ENCODE measurements at regions of chr6 and their contacts with region 1.

Region 1: GRCh38 chr6:55276745-55277530 is 50.3 kb upstream of the GFRAL start:
- DNase-seq: no peak
- H3K4me3 Mint-ChIP-seq: no peak overlapping the region
- H3K27ac Mint-ChIP-seq: no peak overlapping the region
- H3K4me1 Mint-ChIP-seq: no peaks in the 10 kb centered on the region
- H3K27me3 Mint-ChIP-seq: no peaks in the 10 kb centered on the region

Region 2: DNA sequence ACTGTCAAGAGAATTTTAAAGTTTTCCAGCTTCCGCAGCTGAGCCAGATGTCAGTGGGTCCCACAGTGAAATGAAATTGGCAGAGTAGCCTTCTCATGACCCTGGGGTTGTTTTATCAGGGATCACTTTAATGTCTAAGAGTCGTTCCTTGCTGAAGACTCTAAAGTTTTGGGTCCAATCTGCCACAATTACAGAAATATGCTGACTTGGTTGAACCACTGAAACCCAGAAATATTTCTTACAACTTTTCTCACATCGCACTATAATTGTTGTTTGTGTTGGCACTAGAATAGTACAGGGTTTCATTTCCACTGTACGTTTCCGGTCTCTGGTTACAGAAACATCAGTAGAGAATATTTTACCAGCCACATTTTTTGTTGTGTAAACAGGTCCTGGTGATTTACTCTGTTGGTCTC is 193.0 kb after region 1 on chr6:
- intact Hi-C with region 1: loop called (anchors 10 kb)
- DNase-seq: no peak
- H3K4me3 Mint-ChIP-seq: no peak overlapping the region
- H3K27ac Mint-ChIP-seq: no peak overlapping the region
- H3K4me1 Mint-ChIP-seq: no peaks in the 10 kb centered on the region
- H3K27me3 Mint-ChIP-seq: no peaks in the 10 kb centered on the region

Region 3: GRCh38 chr6:55953335-55953734 is 676.4 kb after region 1 on chr6:
- intact Hi-C with region 1: loop called (anchors 5 kb)
- DNase-seq: no peak
- H3K4me3 Mint-ChIP-seq: no peak overlapping the region
- H3K27ac Mint-ChIP-seq: no peak overlapping the region
- H3K4me1 Mint-ChIP-seq: no peaks in the 10 kb centered on the region
- H3K27me3 Mint-ChIP-seq: no peaks in the 10 kb centered on the region

Region 4: DNA sequence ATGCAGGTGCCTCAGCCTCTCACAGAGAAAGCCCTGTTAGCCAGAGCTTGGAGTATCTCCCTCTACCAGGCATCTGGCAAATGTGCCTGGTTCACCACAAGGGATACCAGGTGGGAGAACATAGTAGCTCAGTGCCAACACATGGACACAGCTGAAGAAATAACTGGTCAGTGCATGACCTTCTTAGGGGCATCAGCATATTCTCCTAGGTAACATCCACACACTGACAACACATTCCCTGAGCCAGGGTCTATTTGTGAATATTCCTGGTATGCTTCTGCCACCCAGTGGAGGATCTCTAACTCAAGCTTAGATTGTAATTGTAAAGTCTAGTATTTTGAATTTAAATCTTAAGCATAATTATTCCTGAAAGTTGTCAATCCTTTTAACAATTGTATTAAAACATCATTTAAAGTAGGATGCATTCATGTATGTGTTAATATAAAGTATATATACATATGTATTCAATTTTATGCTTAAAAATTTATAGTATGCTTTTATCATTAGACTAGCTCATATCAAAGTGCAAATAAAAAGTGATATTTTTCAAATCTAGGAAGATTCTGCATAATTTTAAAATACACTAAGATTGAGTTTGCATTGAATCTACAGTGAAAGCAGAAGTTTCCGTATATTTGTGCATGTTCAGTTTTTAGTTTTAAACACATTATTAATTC is 1015.7 kb after region 1 on chr6:
- intact Hi-C with region 1: loop called (anchors 5 kb)
- DNase-seq: no peak
- H3K4me3 Mint-ChIP-seq: no peak overlapping the region
- H3K27ac Mint-ChIP-seq: no peak overlapping the region
- H3K4me1 Mint-ChIP-seq: no peaks in the 10 kb centered on the region
- H3K27me3 Mint-ChIP-seq: no peaks in the 10 kb centered on the region

Measured in activated T-helper 1 cell treated with anti-CD3 and anti-CD28 coated beads, Interleukin-12 subunit alpha, Interleukin-12 subunit beta, Interleukin-2, Interleukin-4 antibody, amounts not matched to agents 30 ng/mL and 10 ng/mL and 1 ng/mL, durations not matched to agents 14 hours and 24 hours and 36 hours (primary cell).